ENCODE measurements at regions of chr4 and their contacts with region 1.

Region 1: GRCh38 chr4:67624939-67625338 is 66.4 kb downstream of the STAP1 start:
- DNase-seq: no peak
- ATAC-seq: no peak
- H3K4me3 ChIP-seq: no peak overlapping the region
- H3K27ac ChIP-seq: no peak overlapping the region
- H3K4me1 ChIP-seq: no peaks in the 10 kb centered on the region
- H3K27me3 ChIP-seq: no peaks in the 10 kb centered on the region
- CTCF ChIP-seq: no peak
- POLR2A ChIP-seq: no peak
- RAD21 ChIP-seq: no peak

Region 2: GRCh38 chr4:67437974-67438713 is 186.8 kb before region 1 on chr4:
- CTCF ChIA-PET with region 1: no interaction called
- POLR2A ChIA-PET with region 1: no interaction called
- dilution Hi-C with region 1: no loop called
- in situ Hi-C with region 1: no loop called
- intact Hi-C with region 1: no loop called
- DNase-seq: peak; percentile 85
- ATAC-seq: peak; percentile 79
- H3K4me3 ChIP-seq: no peak overlapping the region
- H3K27ac ChIP-seq: peak overlapping the region; percentile 44; the same call in 1 of the 2 replicates
- H3K4me1 ChIP-seq: no peaks in the 10 kb centered on the region
- H3K27me3 ChIP-seq: no peaks in the 10 kb centered on the region
- CTCF ChIP-seq: no peak
- POLR2A ChIP-seq: no peak
- RAD21 ChIP-seq: no peak

Region 3: GRCh38 chr4:67542076-67542475 is 82.9 kb before region 1 on chr4:
- CTCF ChIA-PET with region 1: no interaction called
- POLR2A ChIA-PET with region 1: no interaction called
- dilution Hi-C with region 1: no loop called
- in situ Hi-C with region 1: no loop called
- intact Hi-C with region 1: loop called (anchors 5 kb)
- DNase-seq: no peak
- ATAC-seq: no peak
- H3K4me3 ChIP-seq: no peak overlapping the region
- H3K27ac ChIP-seq: no peak overlapping the region
- H3K4me1 ChIP-seq: no peaks in the 10 kb centered on the region
- H3K27me3 ChIP-seq: no peaks in the 10 kb centered on the region
- CTCF ChIP-seq: no peak
- POLR2A ChIP-seq: no peak
- RAD21 ChIP-seq: no peak

Region 4: DNA sequence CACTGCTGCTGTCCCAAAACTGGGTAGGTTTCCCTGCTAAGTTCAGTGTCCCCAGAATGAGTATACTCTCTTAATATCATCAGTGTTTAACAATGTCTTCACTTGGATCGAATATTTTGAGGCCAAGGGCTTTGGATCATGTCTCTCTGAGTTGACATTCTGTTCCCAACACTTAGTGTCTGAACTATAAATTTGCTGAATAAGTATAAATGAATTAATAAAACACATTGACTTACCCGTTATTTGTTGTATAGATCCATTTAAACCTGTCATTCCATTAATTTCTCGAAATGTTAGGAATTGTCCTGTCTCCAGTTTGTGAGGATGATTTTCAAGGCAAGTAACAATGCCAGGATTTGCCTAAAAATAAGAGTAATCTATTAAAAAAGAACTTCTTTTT is 43.4 kb after region 1 on chr4:
- CTCF ChIA-PET with region 1: no interaction called
- POLR2A ChIA-PET with region 1: no interaction called
- dilution Hi-C with region 1: no loop called
- in situ Hi-C with region 1: no loop called
- intact Hi-C with region 1: loop called (anchors 5 kb)
- DNase-seq: no peak
- ATAC-seq: no peak
- H3K4me3 ChIP-seq: no peak overlapping the region
- H3K27ac ChIP-seq: no peak overlapping the region
- H3K4me1 ChIP-seq: no peaks in the 10 kb centered on the region
- H3K27me3 ChIP-seq: no peaks in the 10 kb centered on the region
- CTCF ChIP-seq: no peak
- POLR2A ChIP-seq: no peak
- RAD21 ChIP-seq: no peak

Region 5: GRCh38 chr4:67680581-67681222 is 55.8 kb after region 1 on chr4:
- CTCF ChIA-PET with region 1: no interaction called
- POLR2A ChIA-PET with region 1: no interaction called
- dilution Hi-C with region 1: no loop called
- in situ Hi-C with region 1: no loop called
- intact Hi-C with region 1: no loop called
- DNase-seq: peak; percentile 31
- ATAC-seq: peak; percentile 48; the same call in 1 of the 2 replicates
- H3K4me3 ChIP-seq: no peak overlapping the region
- H3K27ac ChIP-seq: no peak overlapping the region
- H3K4me1 ChIP-seq: peaks cover 6% of the 10 kb centered on the region
- H3K27me3 ChIP-seq: no peaks in the 10 kb centered on the region
- CTCF ChIP-seq: no peak
- POLR2A ChIP-seq: no peak
- RAD21 ChIP-seq: no peak

Region 6: GRCh38 chr4:67896421-67897065 is 271.6 kb after region 1 on chr4:
- CTCF ChIA-PET with region 1: no interaction called
- POLR2A ChIA-PET with region 1: no interaction called
- dilution Hi-C with region 1: no loop called
- in situ Hi-C with region 1: no loop called
- intact Hi-C with region 1: no loop called
- DNase-seq: no peak
- ATAC-seq: no peak
- H3K4me3 ChIP-seq: no peak overlapping the region
- H3K27ac ChIP-seq: no peak overlapping the region
- H3K4me1 ChIP-seq: peaks cover 2% of the 10 kb centered on the region; the same call in 1 of the 2 replicates
- H3K27me3 ChIP-seq: no peaks in the 10 kb centered on the region
- CTCF ChIP-seq: no peak
- POLR2A ChIP-seq: no peak
- RAD21 ChIP-seq: no peak

Measured in IMR-90 (cell line).